A549 (cell line): ENCODE measurements at regions of chr9 and their contacts with region 1.

Region 1: GRCh38 chr9:136170006-136170901 is 34.7 kb downstream of the LHX3 start:
- DNase-seq: peak; percentile 36 to 61
- ATAC-seq: peak; percentile 67 to 92; a peak in 5 of 6 replicates
- H3K4me3 ChIP-seq: no peak overlapping the region
- H3K27ac ChIP-seq: peak overlapping the region in 1 of 2 experiments; percentile 33; a peak in 1 of 6 replicates
- H3K4me1 ChIP-seq: peaks cover 7% of the 10 kb centered on the region; the same call in 1 of the 3 replicates
- CTCF ChIP-seq: peak; percentile 72
- EP300 ChIP-seq: no peak
- POLR2A ChIP-seq: no peak
- RAD21 ChIP-seq: peak; percentile 69 to 75

Region 2: DNA sequence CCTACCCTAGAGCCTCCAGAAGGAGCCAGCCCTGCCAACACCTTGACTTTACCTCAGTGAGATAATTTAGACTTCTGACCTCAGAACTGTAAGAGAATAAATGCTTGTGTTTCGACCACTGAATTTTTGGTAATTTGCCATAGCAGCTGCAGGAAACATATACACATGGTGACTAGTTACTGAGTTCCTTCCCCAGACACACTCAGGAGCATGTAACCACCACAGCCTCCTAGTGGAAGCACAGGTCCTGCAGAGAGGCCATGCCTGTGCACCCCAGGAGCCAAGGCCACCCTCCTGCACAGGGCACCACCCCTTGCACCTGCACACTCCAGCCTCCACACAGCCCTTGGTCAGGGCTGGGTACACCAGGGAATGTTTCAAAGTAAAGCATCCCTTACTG is 255.3 kb before region 1 on chr9:
- CTCF ChIA-PET with region 1: no interaction called
- POLR2A ChIA-PET with region 1: no interaction called
- DNase-seq: no peak
- ATAC-seq: no peak
- H3K4me3 ChIP-seq: no peak overlapping the region
- H3K27ac ChIP-seq: no peak overlapping the region
- H3K4me1 ChIP-seq: no peaks in the 10 kb centered on the region
- CTCF ChIP-seq: no peak
- EP300 ChIP-seq: no peak
- POLR2A ChIP-seq: no peak
- RAD21 ChIP-seq: no peak

Region 3: DNA sequence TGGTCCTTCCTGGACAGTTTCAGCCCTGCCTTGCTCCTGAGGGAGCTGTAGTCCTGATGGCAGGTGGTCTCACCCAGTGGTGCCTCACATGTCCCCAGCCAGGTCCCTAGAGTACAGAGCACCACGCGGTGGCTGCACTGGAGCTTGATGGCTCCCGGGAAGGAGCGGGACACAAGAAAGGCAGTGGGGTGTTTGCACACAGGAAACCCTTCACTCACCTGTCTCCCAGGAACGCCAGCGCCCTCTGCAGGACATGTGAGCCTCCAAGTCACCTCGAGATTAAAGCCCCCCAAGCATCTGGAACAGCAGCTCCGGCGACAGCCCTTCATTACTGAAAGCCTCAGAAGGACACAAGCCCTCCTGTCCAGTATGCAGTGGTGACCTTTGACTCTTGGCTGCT is 31.7 kb before region 1 on chr9:
- CTCF ChIA-PET with region 1: interaction called, 18 read pairs
- POLR2A ChIA-PET with region 1: no interaction called
- DNase-seq: peak in 1 of 2 experiments; percentile 69
- ATAC-seq: peak in 1 of 2 experiments; percentile 22; a peak in 2 of 6 replicates
- H3K4me3 ChIP-seq: no peak overlapping the region
- H3K27ac ChIP-seq: no peak overlapping the region
- H3K4me1 ChIP-seq: peaks cover 4% of the 10 kb centered on the region; the same call in 2 of the 3 replicates
- CTCF ChIP-seq: peak; percentile 29; the same call in 1 of the 3 replicates
- EP300 ChIP-seq: no peak
- POLR2A ChIP-seq: no peak
- RAD21 ChIP-seq: peak in 1 of 2 experiments; percentile 44; a peak in 1 of 5 replicates

Region 4: GRCh38 chr9:136185596-136186366 is 15.5 kb after region 1 on chr9:
- CTCF ChIA-PET with region 1: interaction called, 31 read pairs
- POLR2A ChIA-PET with region 1: interaction called, 7 read pairs
- DNase-seq: no peak
- ATAC-seq: no peak; a peak in 1 of 6 replicates
- H3K4me3 ChIP-seq: no peak overlapping the region
- H3K27ac ChIP-seq: no peak overlapping the region
- H3K4me1 ChIP-seq: no peaks in the 10 kb centered on the region
- CTCF ChIP-seq: no peak
- EP300 ChIP-seq: no peak
- POLR2A ChIP-seq: no peak
- RAD21 ChIP-seq: no peak

Region 5: DNA sequence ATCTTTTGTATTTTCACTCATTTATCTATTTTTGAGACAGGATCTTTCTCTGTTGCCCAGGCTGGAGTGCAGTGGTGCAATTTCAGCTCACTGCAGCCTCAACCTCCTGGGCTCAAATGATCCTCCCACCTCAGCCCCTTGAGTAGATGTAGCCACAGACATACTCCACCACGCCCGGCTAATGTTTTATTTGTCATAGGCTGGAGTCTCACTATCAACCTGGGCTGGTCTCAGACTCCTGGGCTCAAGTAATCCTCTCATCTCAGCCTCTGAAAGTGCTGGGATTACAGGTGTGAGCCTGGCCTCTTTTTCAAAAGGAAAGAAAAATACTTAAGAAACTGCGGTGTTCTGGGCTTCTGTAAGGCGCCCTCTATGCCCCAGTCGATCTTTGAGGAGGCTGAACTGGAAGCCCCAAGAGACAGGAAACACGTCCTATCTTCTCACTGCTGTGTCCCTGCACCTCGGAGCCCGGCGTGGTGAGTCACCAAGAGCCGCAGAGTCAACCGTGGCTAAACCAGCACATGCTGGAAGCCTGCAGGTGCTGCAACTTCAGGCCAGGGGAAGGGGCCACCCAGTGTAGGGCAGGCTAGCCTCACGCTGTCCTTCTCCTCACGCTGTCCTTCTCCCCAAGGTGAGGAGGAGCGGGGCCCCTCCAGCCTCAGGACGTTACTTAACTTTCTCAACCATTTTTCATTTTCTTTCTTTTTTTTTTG is 49.9 kb after region 1 on chr9:
- CTCF ChIA-PET with region 1: interaction called, 33 read pairs
- POLR2A ChIA-PET with region 1: no interaction called
- DNase-seq: peak in 1 of 2 experiments; percentile 44
- ATAC-seq: peak; percentile 79 to 80
- H3K4me3 ChIP-seq: no peak overlapping the region
- H3K27ac ChIP-seq: peak overlapping the region in 1 of 2 experiments; percentile 6; a peak in 1 of 6 replicates
- H3K4me1 ChIP-seq: peaks cover 17% of the 10 kb centered on the region
- CTCF ChIP-seq: no peak
- EP300 ChIP-seq: no peak
- POLR2A ChIP-seq: no peak
- RAD21 ChIP-seq: no peak

Region 6: GRCh38 chr9:136225748-136226679 is 55.8 kb after region 1 on chr9:
- CTCF ChIA-PET with region 1: interaction called, 33 read pairs
- POLR2A ChIA-PET with region 1: no interaction called
- DNase-seq: peak; percentile 72 to 74
- ATAC-seq: peak; percentile 91 to 95
- H3K4me3 ChIP-seq: no peak overlapping the region
- H3K27ac ChIP-seq: no peak overlapping the region
- H3K4me1 ChIP-seq: peaks cover 18% of the 10 kb centered on the region
- CTCF ChIP-seq: peak; percentile 72
- EP300 ChIP-seq: no peak
- POLR2A ChIP-seq: no peak
- RAD21 ChIP-seq: peak; percentile 36 to 58; a peak in 4 of 5 replicates

Region 7: DNA sequence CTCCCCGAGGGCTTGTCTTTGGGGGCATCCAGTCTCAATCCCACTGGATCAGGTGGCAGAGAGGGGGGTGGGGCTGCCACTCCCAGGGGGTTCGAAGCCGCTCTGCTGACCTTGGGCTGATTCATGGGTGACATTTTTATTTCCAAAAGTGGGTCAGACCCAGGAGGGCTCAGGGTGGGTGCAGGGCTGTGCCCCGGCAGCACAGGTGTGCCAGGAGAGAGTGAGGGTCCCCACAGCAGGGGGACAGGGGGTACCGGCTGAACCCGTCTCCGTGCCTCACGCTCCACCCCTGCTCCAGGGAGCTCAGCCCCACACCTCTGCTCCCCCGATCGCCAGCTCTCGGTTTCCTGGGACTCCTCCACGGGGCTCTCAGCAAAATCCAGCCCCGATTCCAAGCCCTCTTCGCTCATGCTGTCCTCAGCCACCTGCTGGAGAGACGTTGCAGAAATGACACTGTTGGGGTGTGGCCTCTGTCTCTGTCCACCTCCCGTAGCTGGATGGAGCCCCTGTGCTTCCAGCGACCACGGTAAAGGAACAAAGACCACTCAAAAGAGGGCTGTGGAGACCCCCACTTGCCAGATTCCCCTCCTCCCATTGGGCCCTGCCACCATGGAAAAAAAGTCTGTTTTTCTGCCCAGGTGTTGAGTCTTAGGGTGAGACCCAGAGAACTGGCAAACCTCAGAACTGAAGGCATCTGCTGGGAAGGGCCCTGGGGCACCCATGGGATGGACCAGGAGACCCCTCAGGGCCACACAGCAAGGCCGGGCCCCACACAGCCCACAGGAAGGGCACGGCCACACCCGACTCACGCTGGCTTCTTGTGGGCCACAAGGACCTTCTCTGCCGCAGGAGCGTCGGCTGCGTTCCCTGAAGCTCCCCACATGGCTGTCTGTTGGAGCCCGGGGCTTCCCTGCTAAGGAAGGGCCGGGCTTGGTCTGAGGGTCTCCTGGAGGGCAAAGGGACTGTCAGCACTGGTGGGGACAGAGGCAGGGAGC is 85.9 kb after region 1 on chr9:
- CTCF ChIA-PET with region 1: interaction called, 14 read pairs
- POLR2A ChIA-PET with region 1: no interaction called
- DNase-seq: peak; percentile 33 to 80
- ATAC-seq: peak; percentile 65 to 77; a peak in 5 of 6 replicates
- H3K4me3 ChIP-seq: no peak overlapping the region
- H3K27ac ChIP-seq: no peak overlapping the region
- H3K4me1 ChIP-seq: peaks cover 4% of the 10 kb centered on the region; the same call in 1 of the 3 replicates
- CTCF ChIP-seq: no peak
- EP300 ChIP-seq: no peak
- POLR2A ChIP-seq: no peak
- RAD21 ChIP-seq: no peak

Region 8: DNA sequence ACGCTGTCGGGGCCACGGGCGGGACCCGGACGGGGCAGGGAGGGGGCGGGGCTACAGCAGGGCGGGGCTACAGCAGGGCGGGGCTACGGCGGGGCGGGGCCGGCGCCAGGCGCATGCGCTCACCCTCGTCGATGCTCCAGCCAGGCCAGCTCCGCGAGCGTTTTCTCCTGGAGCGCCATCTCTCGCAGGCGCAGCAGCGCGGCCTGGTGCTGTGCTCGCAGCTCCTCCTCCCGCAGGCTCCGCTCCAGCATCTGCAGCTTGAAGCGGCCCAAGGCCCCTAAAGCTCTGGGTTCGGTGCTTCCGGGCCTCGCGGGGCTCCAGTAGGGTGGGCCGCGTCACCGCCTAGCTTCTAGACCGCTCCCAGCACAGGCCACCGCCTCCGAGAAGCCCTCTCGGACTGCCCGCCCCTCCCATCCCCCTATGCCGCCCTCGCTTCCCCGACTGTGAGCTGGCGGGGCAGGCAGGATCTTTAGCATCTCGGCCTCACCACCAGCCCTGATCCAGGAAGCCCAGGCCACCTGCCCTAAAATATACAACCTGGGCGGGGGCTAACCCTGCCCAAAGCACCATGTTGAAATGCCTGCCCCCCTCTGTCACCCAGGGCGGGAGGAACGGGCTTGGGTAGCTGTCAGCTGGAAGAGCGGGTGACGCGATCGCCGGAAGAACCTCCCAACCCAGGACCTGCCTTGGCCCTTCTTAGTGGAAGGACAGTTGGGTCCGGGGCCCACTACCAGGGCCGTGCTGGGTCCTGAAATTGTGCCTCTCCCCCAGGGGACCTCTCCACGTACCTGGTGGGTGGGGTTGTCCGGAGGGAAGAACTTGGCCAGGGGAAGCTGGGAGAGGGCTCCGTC is 97.2 kb after region 1 on chr9:
- CTCF ChIA-PET with region 1: interaction called, 10 read pairs
- POLR2A ChIA-PET with region 1: no interaction called
- DNase-seq: peak; percentile 85 to 89
- ATAC-seq: peak; percentile 84 to 93
- H3K4me3 ChIP-seq: peak overlapping the region; percentile 46
- H3K27ac ChIP-seq: peak overlapping the region; percentile 79 to 86
- H3K4me1 ChIP-seq: peaks cover 5% of the 10 kb centered on the region; the same call in 1 of the 3 replicates
- CTCF ChIP-seq: peak; percentile 29; the same call in 2 of the 3 replicates
- EP300 ChIP-seq: no peak
- POLR2A ChIP-seq: peak; percentile 94
- RAD21 ChIP-seq: peak in 1 of 2 experiments; percentile 38; a peak in 1 of 5 replicates